HepG2 (cell line): ENCODE measurements at regions of chr16 and their contacts with region 1.

Region 1: GRCh38 chr16:30805370-30806169 is 18.6 kb upstream of the ZNF629 start:
- DNase-seq: peak; percentile 78
- ATAC-seq: peak; percentile 88
- H3K4me3 ChIP-seq: peak overlapping the region; percentile 74 to 96 (median 89)
- H3K27ac ChIP-seq: peak overlapping the region; percentile 92
- H3K4me1 ChIP-seq: peaks cover 54% of the 10 kb centered on the region
- H3K27me3 ChIP-seq: no peaks in the 10 kb centered on the region; a peak in 1 of 5 replicates
- CTCF ChIP-seq: peak; percentile 65
- EP300 ChIP-seq: peak; percentile 68 to 78; a peak in 3 of 4 replicates
- POLR2A ChIP-seq: peak; percentile 91 to 93
- RAD21 ChIP-seq: peak; percentile 83; the same call in 1 of the 2 replicates

Region 2: GRCh38 chr16:30657866-30658730 is 147.5 kb before region 1 on chr16 and contains the start of gene FBRS:
- CTCF ChIA-PET with region 1: no interaction called
- POLR2A ChIA-PET with region 1: interaction called, 12 read pairs
- in situ Hi-C with region 1: no loop called
- intact Hi-C with region 1: no loop called
- DNase-seq: peak; percentile 100
- ATAC-seq: peak; percentile 85
- H3K4me3 ChIP-seq: peak within 1 kb of the TSS; percentile 78 to 89 (median 82)
- H3K27ac ChIP-seq: peak within 1 kb of the TSS; percentile 93
- H3K4me1 ChIP-seq: peaks cover 36% of the 10 kb centered on the region
- H3K27me3 ChIP-seq: no peaks in the 10 kb centered on the region; a peak in 1 of 5 replicates
- CTCF ChIP-seq: peak; percentile 97
- EP300 ChIP-seq: peak in 1 of 2 experiments; percentile 22; a peak in 2 of 4 replicates
- POLR2A ChIP-seq: peak; percentile 76 to 86
- RAD21 ChIP-seq: peak; percentile 97
- total RNA-seq, gene FBRS: 10.1 and 16.2 TPM in 2 replicates

Region 3: DNA sequence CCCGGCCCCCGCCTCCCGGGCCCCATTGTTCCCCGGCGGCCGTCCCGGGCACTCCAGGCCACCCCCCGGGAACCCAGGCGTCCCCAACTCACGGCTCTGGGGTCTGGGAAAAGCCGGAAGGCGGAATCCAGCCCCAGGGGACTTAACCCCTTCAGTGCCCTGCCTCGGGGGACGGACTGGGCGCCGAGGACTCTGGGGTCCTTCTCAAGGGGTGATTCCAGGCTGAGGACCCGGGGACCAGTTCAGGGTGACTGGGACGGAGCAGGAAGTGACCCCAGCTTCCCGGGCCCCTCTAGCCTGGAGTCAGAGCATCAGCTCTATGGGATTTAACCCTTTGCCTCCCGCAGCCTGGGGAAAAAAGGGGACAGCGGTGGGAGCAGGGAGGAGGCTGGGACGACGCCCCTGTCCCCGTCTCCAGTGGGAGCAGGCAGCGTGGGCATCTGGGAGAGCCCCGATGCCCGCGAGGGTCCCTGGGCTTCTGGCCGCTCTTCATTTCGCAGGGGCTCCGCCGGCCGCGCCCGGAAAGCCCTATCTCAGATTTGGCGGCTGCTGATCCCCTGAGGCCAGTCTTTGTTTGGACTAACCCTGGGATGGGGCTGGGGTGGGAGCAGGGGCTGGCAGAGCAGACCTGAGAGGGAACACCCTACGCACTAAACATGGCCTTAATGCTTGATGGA is 18.5 kb before region 1 on chr16 and contains the start of gene ZNF629:
- CTCF ChIA-PET with region 1: no interaction called
- POLR2A ChIA-PET with region 1: interaction called, 257 read pairs
- in situ Hi-C with region 1: no loop called
- intact Hi-C with region 1: loop called (anchors 1 kb)
- DNase-seq: peak; percentile 79
- ATAC-seq: peak; percentile 83
- H3K4me3 ChIP-seq: peak within 1 kb of the TSS; percentile 99 to 100 (median 100)
- H3K27ac ChIP-seq: peak within 1 kb of the TSS; percentile 78
- H3K4me1 ChIP-seq: peaks cover 30% of the 10 kb centered on the region
- H3K27me3 ChIP-seq: peaks cover 3 to 5% of the 10 kb centered on the region in 2 experiments; a peak in 2 of 5 replicates
- CTCF ChIP-seq: peak; percentile 43
- EP300 ChIP-seq: peak in 1 of 2 experiments; percentile 46; a peak in 2 of 4 replicates
- POLR2A ChIP-seq: peak; percentile 47 to 52
- RAD21 ChIP-seq: peak; percentile 62
- total RNA-seq, gene ZNF629: 14.3 and 16.5 TPM in 2 replicates

Region 4: GRCh38 chr16:30839523-30840227 is 34.1 kb after region 1 on chr16:
- CTCF ChIA-PET with region 1: interaction called, 4 read pairs
- POLR2A ChIA-PET with region 1: interaction called, 24 read pairs
- in situ Hi-C with region 1: no loop called
- intact Hi-C with region 1: no loop called
- DNase-seq: no peak
- ATAC-seq: peak; percentile 5; the same call in 2 of the 3 replicates
- H3K4me3 ChIP-seq: peak overlapping the region in 1 of 3 experiments; percentile 21; a peak in 1 of 6 replicates
- H3K27ac ChIP-seq: peak overlapping the region; percentile 36
- H3K4me1 ChIP-seq: peaks cover 49% of the 10 kb centered on the region
- H3K27me3 ChIP-seq: no peaks in the 10 kb centered on the region
- CTCF ChIP-seq: no peak
- EP300 ChIP-seq: no peak
- POLR2A ChIP-seq: no peak
- RAD21 ChIP-seq: no peak

Region 5: GRCh38 chr16:30902029-30902972 is 96.7 kb after region 1 on chr16:
- CTCF ChIA-PET with region 1: interaction called, 3 read pairs
- POLR2A ChIA-PET with region 1: interaction called, 29 read pairs
- in situ Hi-C with region 1: no loop called
- intact Hi-C with region 1: no loop called
- DNase-seq: peak; percentile 33
- ATAC-seq: peak; percentile 87
- H3K4me3 ChIP-seq: peak overlapping the region; percentile 58 to 77 (median 60)
- H3K27ac ChIP-seq: peak overlapping the region; percentile 65
- H3K4me1 ChIP-seq: peaks cover 75% of the 10 kb centered on the region
- H3K27me3 ChIP-seq: no peaks in the 10 kb centered on the region
- CTCF ChIP-seq: peak; percentile 28; the same call in 1 of the 2 replicates
- EP300 ChIP-seq: no peak; a peak in 1 of 4 replicates
- POLR2A ChIP-seq: peak; percentile 49 to 70; a peak in 3 of 4 replicates
- RAD21 ChIP-seq: peak; percentile 95

Region 6: GRCh38 chr16:31298967-31299366 is 493.4 kb after region 1 on chr16:
- CTCF ChIA-PET with region 1: no interaction called
- POLR2A ChIA-PET with region 1: no interaction called
- in situ Hi-C with region 1: no loop called
- intact Hi-C with region 1: no loop called
- DNase-seq: peak; percentile 24
- ATAC-seq: peak; percentile 37; the same call in 1 of the 3 replicates
- H3K4me3 ChIP-seq: no peak overlapping the region
- H3K27ac ChIP-seq: no peak overlapping the region
- H3K4me1 ChIP-seq: no peaks in the 10 kb centered on the region
- H3K27me3 ChIP-seq: 0 out of 5 replicates have a peak, but pooled peaks cover 0 to 4% of the 10 kb centered on the region in 2 experiments
- CTCF ChIP-seq: peak; percentile 54
- EP300 ChIP-seq: no peak
- POLR2A ChIP-seq: no peak
- RAD21 ChIP-seq: no peak